Ovary (tissue), 10 donors: ENCODE measurements at regions of chr7 and their contacts with region 1.

Region 1: DNA sequence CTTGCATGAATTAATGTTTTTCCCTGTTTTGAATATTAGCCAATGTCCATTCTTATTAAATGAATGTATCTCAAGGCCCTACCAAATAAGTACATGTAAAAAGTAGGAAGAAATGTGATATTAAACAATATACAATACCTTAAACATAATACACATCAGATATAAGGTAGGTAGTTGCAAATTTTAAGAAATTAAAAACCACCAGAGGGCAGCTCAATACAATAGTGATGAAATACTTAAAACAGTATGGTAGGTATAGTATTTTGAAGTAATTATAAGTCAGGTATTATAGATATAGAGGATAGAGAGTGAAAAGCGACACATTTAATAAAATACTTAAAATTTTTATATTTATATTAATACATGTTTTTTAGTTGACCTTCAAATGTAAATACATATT is 43.6 kb upstream of the CDK14 start:
- DNase-seq: no peak
- H3K4me3 ChIP-seq: no peak overlapping the region
- H3K27ac ChIP-seq: no peak overlapping the region
- H3K4me1 ChIP-seq: no peaks in the 10 kb centered on the region
- H3K27me3 ChIP-seq: no peaks in the 10 kb centered on the region
- CTCF ChIP-seq: peak; percentile 6 to 25 (median 22)
- EP300 ChIP-seq: no peak
- POLR2A ChIP-seq: no peak

Region 2: DNA sequence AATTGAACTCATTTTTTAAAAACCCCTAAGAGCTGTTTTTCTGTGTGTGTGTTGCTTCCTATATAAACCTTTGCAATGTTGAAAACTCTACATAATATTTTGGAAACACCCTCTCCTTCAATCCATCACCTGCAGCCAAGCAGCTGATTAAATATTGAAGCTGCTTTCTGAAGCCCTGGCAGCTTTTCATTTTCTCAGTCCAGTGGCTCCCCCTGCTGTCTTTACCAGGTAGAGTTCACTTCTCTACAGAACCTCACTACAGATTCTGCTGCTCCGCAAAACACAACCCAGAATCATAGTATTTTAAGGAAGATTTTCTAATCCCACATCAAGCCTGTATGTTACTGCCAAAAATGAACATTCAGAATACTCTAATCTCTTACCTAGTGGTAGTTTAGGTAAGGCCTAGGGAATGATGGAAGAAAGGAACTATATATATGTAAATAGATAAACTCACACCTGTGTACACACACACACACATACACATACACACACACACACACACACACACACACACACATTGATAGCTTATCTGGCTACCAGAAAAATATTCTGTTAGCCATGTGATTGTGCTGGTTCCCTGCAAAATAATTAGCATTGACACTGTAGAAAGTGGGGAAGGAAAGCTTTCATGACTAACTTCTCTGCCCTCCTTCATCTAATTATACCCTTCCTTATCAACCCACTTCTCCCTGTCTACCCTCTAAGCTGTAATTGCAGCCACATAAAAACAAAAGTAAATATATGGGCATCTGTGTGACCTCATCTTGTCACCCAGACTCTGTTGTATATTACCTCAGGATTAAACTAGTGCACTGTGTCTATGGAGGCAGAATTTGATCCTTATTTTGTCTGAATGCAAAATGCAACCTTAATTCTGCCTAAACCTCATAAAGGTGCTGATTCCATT is 482.2 kb after region 1 on chr7:
- intact Hi-C with region 1: loop called in 1 of 4 experiments (anchors 5 kb)
- DNase-seq: peak in 4 of 5 donors; percentile 18 to 42 (median 28)
- H3K4me3 ChIP-seq: no peak overlapping the region
- H3K27ac ChIP-seq: no peak overlapping the region
- H3K4me1 ChIP-seq: no peaks in the 10 kb centered on the region
- H3K27me3 ChIP-seq: no peaks in the 10 kb centered on the region
- CTCF ChIP-seq: peak in 1 of 3 donors; percentile 37
- EP300 ChIP-seq: no peak
- POLR2A ChIP-seq: no peak